Activated naive CD4-positive, alpha-beta T cell treated with anti-CD3 and anti-CD28 coated beads, Interleukin-2, amount 10 ng/mL, durations not matched to agents 7 days and 5 days (primary cell): ENCODE measurements at regions of chr16 and their contacts with region 1.

Region 1: DNA sequence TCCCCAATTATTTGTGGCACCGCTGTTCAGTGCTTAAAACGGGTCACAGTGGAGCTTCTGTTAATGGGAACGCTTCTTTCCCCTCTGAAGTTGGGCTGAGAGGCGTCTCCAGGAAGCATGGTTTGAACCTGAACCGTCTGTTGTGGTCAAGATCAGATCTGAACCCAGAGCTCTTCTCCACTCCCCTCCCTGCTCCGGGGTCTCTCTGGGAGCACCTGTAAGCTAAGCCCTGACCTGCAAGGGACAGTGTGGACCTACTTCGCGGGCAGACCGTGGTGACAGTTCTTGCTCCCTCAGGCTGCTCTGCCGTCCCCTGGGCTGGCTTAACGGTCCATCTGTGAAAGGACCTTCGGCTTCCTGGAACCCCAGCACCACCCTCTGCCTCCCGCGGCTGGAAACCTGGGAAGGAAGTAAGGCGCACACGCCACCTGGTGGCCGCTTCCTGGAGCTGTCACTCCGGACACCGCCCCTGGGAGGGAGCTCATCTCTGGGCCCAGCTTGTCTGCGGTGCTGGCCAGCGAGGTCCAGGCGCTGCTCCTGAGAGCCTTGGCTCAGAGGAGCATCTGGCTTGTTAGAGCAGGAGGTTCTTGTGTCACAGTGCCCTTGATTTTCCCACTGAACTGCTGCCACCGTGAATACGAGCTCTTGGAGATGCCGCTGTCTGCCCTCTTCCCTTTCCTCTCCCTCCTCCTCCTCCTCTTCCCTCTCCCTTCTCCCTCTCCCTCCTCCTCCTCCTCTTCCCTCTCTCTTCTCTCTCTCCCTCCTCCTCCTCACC is 518.5 kb upstream of the EEF2KMT start:
- DNase-seq: peak; percentile 40
- H3K4me3 Mint-ChIP-seq: no peak overlapping the region
- H3K27ac Mint-ChIP-seq: no peak overlapping the region
- H3K4me1 Mint-ChIP-seq: peaks cover 5% of the 10 kb centered on the region
- H3K27me3 Mint-ChIP-seq: peaks cover 5% of the 10 kb centered on the region

Region 2: DNA sequence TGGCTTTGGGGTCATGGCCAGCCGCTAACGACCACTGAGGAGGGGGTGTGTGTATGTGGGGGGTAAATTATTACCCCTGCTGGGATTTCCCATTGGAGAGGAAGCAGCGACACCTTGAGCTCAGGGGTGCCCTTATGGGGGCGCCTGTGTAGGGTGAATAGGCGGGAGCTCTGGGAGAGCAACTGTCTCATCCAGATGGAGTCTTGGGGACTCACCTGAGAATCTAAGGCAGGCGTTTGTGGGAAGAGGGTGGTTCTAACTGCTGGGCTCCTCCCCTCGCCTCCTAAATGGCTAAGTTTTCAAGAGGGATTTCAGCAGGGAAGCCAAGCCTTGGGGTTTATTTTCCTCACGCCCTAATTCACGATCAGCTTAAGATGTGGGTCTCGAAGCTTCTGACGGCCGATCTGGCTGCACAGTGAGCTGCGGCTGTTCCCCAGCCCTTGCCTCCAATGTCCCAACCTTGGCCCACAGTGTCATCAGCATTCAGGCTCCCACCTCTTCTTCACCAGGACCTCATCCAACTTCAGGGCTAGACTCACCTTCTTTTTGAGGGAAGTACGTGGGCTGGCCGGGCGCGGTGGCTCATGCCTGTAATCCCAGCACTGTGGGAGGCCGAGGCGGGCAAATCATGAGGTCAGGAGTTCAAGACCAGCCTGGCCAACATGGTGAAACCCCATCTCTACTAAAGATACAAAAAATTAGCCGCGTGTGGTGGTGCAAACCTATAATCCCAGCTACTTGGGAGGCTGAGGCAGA is 381.6 kb before region 1 on chr16:
- CTCF ChIA-PET with region 1: interaction called, 12 read pairs
- DNase-seq: no peak
- H3K4me3 Mint-ChIP-seq: no peak overlapping the region
- H3K27ac Mint-ChIP-seq: no peak overlapping the region
- H3K4me1 Mint-ChIP-seq: peaks cover 5% of the 10 kb centered on the region
- H3K27me3 Mint-ChIP-seq: peaks cover 19% of the 10 kb centered on the region

Region 3: DNA sequence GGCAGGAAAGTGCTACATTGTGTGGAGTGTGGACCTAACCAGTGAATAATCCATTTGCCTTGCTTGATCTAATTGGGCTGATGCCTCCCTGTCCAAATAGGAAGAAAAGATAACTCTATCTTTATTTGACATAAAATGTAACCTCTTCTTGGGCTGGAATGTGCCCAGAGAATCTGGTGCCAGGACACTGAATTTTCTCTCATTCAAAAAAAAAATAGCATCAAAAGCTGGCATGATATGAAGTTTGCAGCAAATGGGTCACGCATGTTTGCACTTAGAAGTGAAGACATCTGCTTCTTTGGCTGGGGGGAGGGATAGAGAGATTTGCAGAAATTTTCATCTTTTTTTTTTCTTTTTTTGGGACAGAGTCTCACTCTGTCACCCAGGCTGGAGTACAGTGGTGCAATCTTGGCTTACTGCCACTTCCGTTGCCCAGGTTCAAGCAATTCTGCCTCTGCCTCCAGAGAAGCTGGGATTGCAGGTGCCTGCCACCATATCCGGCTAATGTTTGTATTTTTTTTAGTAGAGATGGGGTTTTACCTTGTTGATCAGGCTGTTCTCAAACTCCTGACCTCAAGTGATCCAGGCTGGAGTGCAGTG is 40.3 kb before region 1 on chr16:
- CTCF ChIA-PET with region 1: no interaction called
- DNase-seq: no peak
- H3K4me3 Mint-ChIP-seq: no peak overlapping the region
- H3K27ac Mint-ChIP-seq: no peak overlapping the region
- H3K4me1 Mint-ChIP-seq: no peaks in the 10 kb centered on the region
- H3K27me3 Mint-ChIP-seq: no peaks in the 10 kb centered on the region

Region 4: GRCh38 chr16:5633845-5634440 is 17.9 kb after region 1 on chr16:
- CTCF ChIA-PET with region 1: interaction called, 10 read pairs
- DNase-seq: no peak
- H3K4me3 Mint-ChIP-seq: no peak overlapping the region
- H3K27ac Mint-ChIP-seq: no peak overlapping the region
- H3K4me1 Mint-ChIP-seq: no peaks in the 10 kb centered on the region
- H3K27me3 Mint-ChIP-seq: no peaks in the 10 kb centered on the region